ENCODE measurements at regions of chr20 and their contacts with region 1.

Region 1: GRCh38 chr20:13243826-13244376 is 22.8 kb downstream of the ISM1 start:
- DNase-seq: no peak
- H3K4me3 Mint-ChIP-seq: no peak overlapping the region
- H3K27ac Mint-ChIP-seq: no peak overlapping the region
- H3K4me1 Mint-ChIP-seq: peaks cover 33% of the 10 kb centered on the region
- H3K27me3 Mint-ChIP-seq: no peaks in the 10 kb centered on the region

Region 2: DNA sequence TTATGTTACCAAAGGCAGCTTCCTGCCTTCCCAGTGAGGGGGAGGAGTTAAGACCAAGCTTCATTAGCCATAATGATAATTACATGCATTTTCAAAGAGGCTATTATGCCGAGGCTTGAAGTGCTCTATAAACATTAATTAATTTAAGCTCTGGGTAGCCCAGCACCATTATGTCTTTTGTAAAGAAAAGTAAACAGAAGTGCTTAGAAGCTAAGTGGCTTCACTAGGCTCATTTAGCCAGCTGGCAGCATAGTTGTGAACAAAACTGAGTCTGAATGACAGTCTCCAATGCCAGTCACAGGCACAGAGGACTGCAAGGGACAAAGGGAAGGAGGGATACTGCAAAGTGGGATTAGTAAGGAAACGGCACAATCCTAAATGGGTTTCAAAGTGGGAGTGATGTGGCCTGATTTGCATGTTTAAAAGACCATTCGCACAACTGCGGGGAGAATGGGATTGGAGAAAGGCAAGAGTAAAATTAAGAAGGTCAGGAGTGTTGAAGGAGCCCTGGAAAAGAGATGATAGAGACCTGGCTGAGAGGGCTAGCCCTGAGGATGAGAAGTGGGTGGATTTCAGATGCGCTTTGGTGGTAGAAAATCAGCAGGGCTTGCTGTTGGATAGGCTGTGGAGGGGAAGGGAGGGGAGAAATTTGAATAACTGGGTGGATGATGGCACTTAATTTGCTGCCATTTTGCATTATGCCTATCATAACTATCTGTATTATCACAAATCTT is 43.0 kb before region 1 on chr20:
- intact Hi-C with region 1: no loop called
- DNase-seq: no peak
- H3K4me3 Mint-ChIP-seq: no peak overlapping the region
- H3K27ac Mint-ChIP-seq: no peak overlapping the region
- H3K4me1 Mint-ChIP-seq: no peaks in the 10 kb centered on the region
- H3K27me3 Mint-ChIP-seq: peaks cover 3% of the 10 kb centered on the region

Region 3: DNA sequence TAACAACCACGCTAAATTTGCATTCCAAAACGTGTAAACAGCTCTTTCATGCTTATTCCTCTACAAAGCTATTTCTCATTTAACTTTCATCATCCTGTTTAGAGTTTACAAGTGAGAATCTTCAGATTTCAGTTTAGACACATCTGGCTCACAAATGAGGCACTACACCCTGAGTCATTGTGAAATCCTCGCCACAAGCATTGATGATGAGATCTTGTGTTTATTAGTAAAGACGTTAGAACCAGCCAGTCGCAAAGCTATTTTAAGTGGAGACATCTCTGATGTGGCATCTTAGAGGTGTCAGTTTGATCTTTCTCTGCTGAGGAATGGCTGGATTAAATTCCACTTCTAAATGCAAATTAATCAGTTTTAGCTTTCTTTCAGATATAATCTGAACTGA is 31.2 kb before region 1 on chr20:
- intact Hi-C with region 1: loop called (anchors 2 kb)
- DNase-seq: peak; percentile 59
- H3K4me3 Mint-ChIP-seq: no peak overlapping the region
- H3K27ac Mint-ChIP-seq: peak overlapping the region; percentile 16
- H3K4me1 Mint-ChIP-seq: peaks cover 7% of the 10 kb centered on the region
- H3K27me3 Mint-ChIP-seq: peaks cover 46% of the 10 kb centered on the region

Region 4: GRCh38 chr20:13221673-13222318 is 22.1 kb before region 1 on chr20:
- intact Hi-C with region 1: loop called (anchors 2 kb)
- DNase-seq: peak; percentile 93
- H3K4me3 Mint-ChIP-seq: peak overlapping the region; percentile 89
- H3K27ac Mint-ChIP-seq: peak overlapping the region; percentile 81
- H3K4me1 Mint-ChIP-seq: peaks cover 16% of the 10 kb centered on the region
- H3K27me3 Mint-ChIP-seq: peaks cover 57% of the 10 kb centered on the region

Region 5: DNA sequence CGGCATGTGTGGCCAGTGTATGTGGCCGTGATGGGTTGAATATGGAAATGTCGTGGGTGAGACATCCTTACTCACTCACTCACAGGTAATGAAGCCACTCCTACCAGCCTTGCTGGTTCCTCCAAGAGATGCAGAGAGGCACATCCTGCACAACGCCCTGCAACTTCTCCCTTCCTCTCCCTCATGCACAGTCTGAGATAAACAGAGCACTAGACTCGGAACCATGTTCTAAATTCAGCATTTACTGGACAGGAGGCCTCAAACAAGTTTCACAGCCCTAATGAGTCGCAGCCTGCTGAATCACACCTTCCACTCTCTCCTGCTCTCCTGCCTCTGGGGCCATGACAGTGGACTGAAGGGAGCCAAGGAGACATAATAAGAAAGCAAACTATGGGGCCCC is 68.4 kb after region 1 on chr20:
- intact Hi-C with region 1: loop called (anchors 1 kb)
- DNase-seq: no peak
- H3K4me3 Mint-ChIP-seq: no peak overlapping the region
- H3K27ac Mint-ChIP-seq: peak overlapping the region; percentile 14
- H3K4me1 Mint-ChIP-seq: peaks cover 16% of the 10 kb centered on the region
- H3K27me3 Mint-ChIP-seq: peaks cover 4% of the 10 kb centered on the region

Measured in activated CD4-positive, alpha-beta T cell treated with anti-CD3 and anti-CD28 coated beads, Interleukin-2, amount 10 ng/mL, durations not matched to agents 24 days and 14 days (primary cell).